ENCODE measurements at regions of chr6 and their contacts with region 1.

Region 1: DNA sequence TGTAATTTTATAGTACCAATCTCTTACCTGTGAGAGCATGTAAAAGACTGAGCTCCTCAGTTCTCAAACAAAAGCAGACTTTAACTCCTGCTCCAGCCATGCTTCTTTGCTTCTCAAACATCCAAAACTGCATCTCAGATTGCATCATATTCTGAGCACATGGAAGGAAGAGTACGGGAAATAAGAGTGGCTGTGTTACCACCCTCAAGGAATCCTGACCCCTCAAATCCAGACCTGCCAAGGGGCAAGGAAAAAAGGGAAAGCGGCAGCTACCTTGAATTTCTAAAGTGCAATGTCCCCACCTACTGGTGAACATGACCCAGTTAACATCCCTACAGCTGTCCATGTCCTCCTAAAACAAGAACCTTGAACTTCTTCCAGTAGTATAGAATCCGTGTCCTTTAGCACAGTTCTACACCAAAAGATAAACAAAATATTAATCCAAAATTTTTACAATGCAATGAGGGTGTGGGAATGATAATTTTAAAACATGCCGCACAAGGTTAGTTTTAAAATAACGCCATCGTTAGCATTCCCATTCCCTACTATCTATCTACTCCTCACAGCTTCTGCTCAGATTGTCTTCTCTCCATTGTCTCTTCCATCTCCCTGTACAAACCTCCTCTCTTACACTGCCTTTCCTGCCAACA is 34.1 kb upstream of the HLA-DQB1 start:
- DNase-seq: no peak
- H3K4me3 ChIP-seq: peak overlapping the region in 1 of 8 donors; percentile 30
- H3K27ac ChIP-seq: peak overlapping the region in 1 of 8 donors; percentile 46
- H3K4me1 ChIP-seq: peaks cover 0 to 8% (median 0%) of the 10 kb centered on the region in 6 donors
- H3K27me3 ChIP-seq: peaks cover 0 to 20% (median 0%) of the 10 kb centered on the region in 7 donors
- CTCF ChIP-seq: peak; percentile 43 to 82 (median 67)
- POLR2A ChIP-seq: no peak

Region 2: DNA sequence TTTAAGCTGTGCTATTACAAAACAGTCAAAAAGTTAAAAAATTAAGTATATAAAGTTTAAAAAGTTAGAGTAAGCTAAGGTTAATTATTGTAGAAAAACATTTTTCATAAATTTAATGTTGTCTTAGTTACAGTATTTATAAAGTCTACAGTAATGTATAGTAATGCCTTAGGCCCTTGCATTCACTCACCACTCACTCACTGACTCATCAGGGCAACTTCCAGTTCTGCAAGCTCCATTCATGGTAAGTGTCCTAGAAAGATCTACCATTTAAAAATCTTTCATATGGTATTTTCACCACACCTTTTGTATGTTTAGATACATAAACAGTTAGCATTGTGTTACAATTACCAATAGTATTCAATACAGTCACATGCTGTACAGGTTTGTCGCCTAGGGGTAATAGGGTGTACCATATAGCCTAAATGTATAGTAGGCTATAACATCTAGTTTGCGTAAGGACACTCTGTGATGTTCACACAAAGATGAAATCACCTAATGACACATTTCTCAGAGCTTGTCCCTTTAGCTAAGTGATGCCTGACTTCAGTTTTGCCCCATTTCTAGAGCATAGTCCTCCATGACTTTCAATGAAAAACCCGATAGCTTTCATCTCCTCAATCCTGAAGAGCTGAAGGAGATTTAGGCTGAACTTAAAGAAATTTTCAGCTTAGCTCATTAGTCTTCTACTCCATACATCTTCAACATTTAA is 275.8 kb before region 1 on chr6:
- intact Hi-C with region 1: loop called (anchors 5 kb)
- DNase-seq: no peak
- H3K4me3 ChIP-seq: no peak overlapping the region
- H3K27ac ChIP-seq: no peak overlapping the region
- H3K4me1 ChIP-seq: no peaks in the 10 kb centered on the region
- H3K27me3 ChIP-seq: peaks cover 0 to 4% (median 0%) of the 10 kb centered on the region in 7 donors
- CTCF ChIP-seq: no peak
- POLR2A ChIP-seq: no peak

Measured in spleen (tissue), 13 donors.